HepG2 (cell line): ENCODE measurements at regions of chr14 and their contacts with region 1.

Region 1: GRCh38 chr14:70239802-70240201 is 51.1 kb upstream of the SLC8A3 start:
- DNase-seq: no peak
- ATAC-seq: no peak
- H3K4me3 ChIP-seq: no peak overlapping the region
- H3K27ac ChIP-seq: no peak overlapping the region
- H3K4me1 ChIP-seq: no peaks in the 10 kb centered on the region
- H3K27me3 ChIP-seq: no peaks in the 10 kb centered on the region; a peak in 1 of 5 replicates
- CTCF ChIP-seq: no peak
- EP300 ChIP-seq: no peak
- POLR2A ChIP-seq: no peak
- RAD21 ChIP-seq: no peak

Region 2: DNA sequence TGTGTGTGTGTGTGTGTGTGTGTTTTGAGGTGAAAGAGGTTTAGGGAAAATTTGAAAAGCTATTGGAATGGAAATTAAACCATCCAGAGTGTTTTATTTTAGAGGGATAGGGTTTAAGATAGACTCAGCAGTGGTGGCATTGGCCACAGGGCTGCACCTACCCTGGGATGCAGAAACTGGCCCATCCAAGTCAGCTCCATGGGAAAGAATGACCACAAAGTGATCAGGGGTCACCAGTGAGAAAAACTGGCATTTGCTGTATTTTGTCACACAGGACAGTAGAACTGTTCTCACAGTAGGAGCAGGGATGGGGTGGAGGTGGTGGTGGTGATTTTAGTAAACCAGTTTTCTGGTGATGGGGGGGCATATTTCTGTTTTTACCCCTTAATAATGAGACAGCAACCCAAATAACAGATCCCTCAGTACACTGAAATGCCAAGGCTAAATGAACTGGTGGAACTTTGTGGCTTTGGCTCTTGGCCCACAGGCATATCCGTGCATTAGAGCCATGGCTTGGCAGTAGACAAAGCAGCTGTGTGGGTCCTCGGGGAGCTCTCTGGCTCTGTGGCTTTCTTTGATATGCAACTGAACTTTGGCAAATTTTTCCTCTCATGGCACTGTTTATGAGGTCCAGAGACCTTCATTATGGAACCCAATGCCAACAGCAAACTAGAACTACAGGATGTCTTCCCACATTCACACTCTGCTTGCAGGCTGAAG is 1795.2 kb before region 1 on chr14:
- CTCF ChIA-PET with region 1: no interaction called
- POLR2A ChIA-PET with region 1: no interaction called
- in situ Hi-C with region 1: no loop called
- intact Hi-C with region 1: loop called (anchors 10 kb)
- DNase-seq: peak; percentile 20
- ATAC-seq: no peak
- H3K4me3 ChIP-seq: no peak overlapping the region
- H3K27ac ChIP-seq: no peak overlapping the region
- H3K4me1 ChIP-seq: peaks cover 10% of the 10 kb centered on the region
- H3K27me3 ChIP-seq: no peaks in the 10 kb centered on the region
- CTCF ChIP-seq: no peak
- EP300 ChIP-seq: no peak
- POLR2A ChIP-seq: no peak
- RAD21 ChIP-seq: no peak

Region 3: GRCh38 chr14:69953266-69953915 is 286.4 kb before region 1 on chr14:
- CTCF ChIA-PET with region 1: no interaction called
- POLR2A ChIA-PET with region 1: no interaction called
- in situ Hi-C with region 1: no loop called
- intact Hi-C with region 1: no loop called
- DNase-seq: no peak
- ATAC-seq: no peak
- H3K4me3 ChIP-seq: no peak overlapping the region
- H3K27ac ChIP-seq: no peak overlapping the region
- H3K4me1 ChIP-seq: peaks cover 12% of the 10 kb centered on the region
- H3K27me3 ChIP-seq: no peaks in the 10 kb centered on the region
- CTCF ChIP-seq: no peak
- EP300 ChIP-seq: no peak
- POLR2A ChIP-seq: no peak
- RAD21 ChIP-seq: no peak

Region 4: GRCh38 chr14:70527501-70528105 is 287.8 kb after region 1 on chr14:
- CTCF ChIA-PET with region 1: no interaction called
- POLR2A ChIA-PET with region 1: no interaction called
- in situ Hi-C with region 1: no loop called
- intact Hi-C with region 1: no loop called
- DNase-seq: no peak
- ATAC-seq: no peak
- H3K4me3 ChIP-seq: no peak overlapping the region
- H3K27ac ChIP-seq: no peak overlapping the region
- H3K4me1 ChIP-seq: no peaks in the 10 kb centered on the region
- H3K27me3 ChIP-seq: no peaks in the 10 kb centered on the region
- CTCF ChIP-seq: no peak
- EP300 ChIP-seq: no peak
- POLR2A ChIP-seq: no peak
- RAD21 ChIP-seq: no peak